ENCODE measurements at regions of chr5 and their contacts with region 1.

Region 1: GRCh38 chr5:91383027-91383955 is at the start of gene ARRDC3:
- DNase-seq: peak; percentile 90 to 99 (median 98)
- ATAC-seq: peak; percentile 32 to 46
- H3K4me3 Mint-ChIP-seq: peak within 1 kb of the TSS; percentile 90 to 100 (median 99)
- H3K27ac Mint-ChIP-seq: peak within 1 kb of the TSS; percentile 92 to 100 (median 99)
- H3K4me1 Mint-ChIP-seq: peaks cover 9 to 26% (median 20%) of the 10 kb centered on the region in 4 donors
- H3K27me3 Mint-ChIP-seq: no peaks in the 10 kb centered on the region
- polyA plus RNA-seq, gene ARRDC3: 72.6 to 134 (median 113) TPM

Region 2: GRCh38 chr5:90873033-90873517 is 510.2 kb before region 1 on chr5:
- POLR2A ChIA-PET with region 1: interaction called, 25 read pairs
- DNase-seq: peak in 8 of 10 donors; percentile 14 to 80 (median 46)
- ATAC-seq: peak; percentile 86 to 87
- H3K4me3 Mint-ChIP-seq: peak overlapping the region; percentile 36 to 74 (median 52)
- H3K27ac Mint-ChIP-seq: peak overlapping the region; percentile 33 to 92 (median 82)
- H3K4me1 Mint-ChIP-seq: peaks cover 18 to 43% (median 34%) of the 10 kb centered on the region in 4 donors
- H3K27me3 Mint-ChIP-seq: peaks cover 0 to 2% (median 0%) of the 10 kb centered on the region in 5 donors

Region 3: DNA sequence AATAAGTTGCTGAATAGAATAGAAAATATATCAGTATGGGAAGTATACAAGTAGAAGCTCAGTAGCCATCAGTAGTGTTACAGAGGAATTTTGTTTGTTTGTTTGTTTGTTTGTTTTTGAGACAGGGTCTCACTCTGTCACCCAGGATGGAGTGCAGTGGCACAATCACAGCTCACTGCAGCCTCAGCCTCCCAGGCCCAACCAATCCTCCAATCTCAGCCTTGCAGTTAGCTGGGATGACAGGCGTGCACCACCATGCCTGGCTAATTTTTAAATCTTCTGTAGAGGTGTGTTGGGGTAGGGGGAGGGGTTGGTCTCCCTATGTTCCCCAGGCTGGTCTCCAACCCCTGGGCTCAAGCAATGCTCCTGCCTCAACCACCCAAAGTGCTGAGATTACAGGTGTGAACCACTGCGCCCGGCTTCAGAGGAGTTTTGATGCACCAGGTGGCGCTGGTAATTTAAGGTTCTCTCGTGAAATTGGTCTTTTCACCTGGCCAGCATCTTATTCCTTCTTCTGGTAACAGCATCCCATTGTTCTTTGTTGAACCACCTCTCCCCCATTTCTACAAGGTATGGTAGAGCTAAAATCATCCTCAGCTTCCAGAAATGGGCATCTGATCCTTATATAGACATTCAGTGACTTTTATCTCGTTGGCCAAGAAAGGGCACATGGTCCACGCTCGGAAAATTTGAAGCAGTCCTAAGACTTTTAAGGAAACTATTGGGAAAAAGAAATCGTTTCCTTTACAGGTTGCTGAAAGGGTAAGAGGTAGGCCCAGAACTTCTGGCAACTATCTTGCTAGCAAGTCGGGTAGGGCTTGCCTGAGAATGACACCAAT is 157.2 kb before region 1 on chr5:
- POLR2A ChIA-PET with region 1: interaction called, 58 read pairs
- DNase-seq: peak; percentile 21 to 77 (median 48)
- ATAC-seq: peak; percentile 59 to 85
- H3K4me3 Mint-ChIP-seq: no peak overlapping the region
- H3K27ac Mint-ChIP-seq: peak overlapping the region in 2 of 10 donors; percentile 15 to 22
- H3K4me1 Mint-ChIP-seq: peaks cover 0 to 3% (median 0%) of the 10 kb centered on the region in 4 donors
- H3K27me3 Mint-ChIP-seq: peaks cover 0 to 6% (median 0%) of the 10 kb centered on the region in 5 donors

Region 4: GRCh38 chr5:91280362-91281269 is 102.7 kb before region 1 on chr5:
- POLR2A ChIA-PET with region 1: interaction called, 47 read pairs
- DNase-seq: peak; percentile 59 to 83 (median 70)
- ATAC-seq: peak; percentile 77 to 86
- H3K4me3 Mint-ChIP-seq: peak overlapping the region; percentile 82 to 97 (median 92)
- H3K27ac Mint-ChIP-seq: peak overlapping the region; percentile 74 to 97 (median 93)
- H3K4me1 Mint-ChIP-seq: peaks cover 18 to 32% (median 23%) of the 10 kb centered on the region in 4 donors
- H3K27me3 Mint-ChIP-seq: peaks cover 0 to 4% (median 0%) of the 10 kb centered on the region in 5 donors

Region 5: GRCh38 chr5:91373016-91373415 is 10.3 kb before region 1 on chr5:
- POLR2A ChIA-PET with region 1: interaction called, 35 read pairs
- DNase-seq: no peak
- ATAC-seq: no peak
- H3K4me3 Mint-ChIP-seq: peak overlapping the region in 7 of 10 donors; percentile 1 to 53 (median 13)
- H3K27ac Mint-ChIP-seq: peak overlapping the region; percentile 1 to 84 (median 42)
- H3K4me1 Mint-ChIP-seq: peaks cover 21 to 83% (median 62%) of the 10 kb centered on the region in 4 donors
- H3K27me3 Mint-ChIP-seq: no peaks in the 10 kb centered on the region